Panc1 (cell line): ENCODE measurements at regions of chr1 and their contacts with region 1.

Region 1: DNA sequence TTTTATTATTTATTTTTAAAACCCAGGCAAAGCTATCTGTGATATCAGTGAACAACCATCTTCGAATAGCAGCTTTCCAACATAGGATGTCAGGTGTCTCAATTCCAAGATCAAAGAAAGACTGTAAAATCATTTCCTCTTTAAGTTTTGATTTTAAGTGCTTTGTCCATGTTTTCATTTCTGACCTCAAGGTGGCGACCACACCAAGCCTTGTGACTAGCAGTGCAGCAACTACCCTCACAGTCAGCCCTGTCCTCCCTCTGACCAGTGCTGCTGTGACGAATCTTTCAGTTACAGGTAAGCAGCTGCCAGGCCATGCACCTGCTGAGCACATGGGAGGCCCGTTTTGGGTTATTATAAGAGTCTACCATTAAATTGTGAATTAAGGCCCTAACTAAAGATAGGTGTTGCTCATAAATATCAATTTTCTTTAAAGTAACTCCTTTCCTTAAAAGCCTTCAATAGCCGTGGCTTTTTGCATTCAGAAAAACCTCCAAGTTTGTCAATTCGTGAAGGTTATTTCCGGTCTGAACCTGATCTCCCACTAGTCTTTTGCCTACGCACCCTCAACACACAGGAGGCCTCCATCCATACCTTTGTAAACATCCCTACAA is 117.0 kb downstream of the CD247 start:
- DNase-seq: peak; percentile 15
- ATAC-seq: peak; percentile 88
- H3K4me3 ChIP-seq: no peak overlapping the region
- H3K27ac ChIP-seq: no peak overlapping the region
- H3K4me1 ChIP-seq: no peaks in the 10 kb centered on the region
- H3K27me3 ChIP-seq: no peaks in the 10 kb centered on the region
- CTCF ChIP-seq: peak; percentile 82

Region 2: GRCh38 chr1:167263819-167264464 is 137.4 kb before region 1 on chr1:
- CTCF ChIA-PET with region 1: interaction called, 4 read pairs
- POLR2A ChIA-PET with region 1: no interaction called
- in situ Hi-C with region 1: no loop called
- intact Hi-C with region 1: loop called (anchors 10 kb)
- DNase-seq: no peak
- ATAC-seq: no peak
- H3K4me3 ChIP-seq: no peak overlapping the region
- H3K27ac ChIP-seq: no peak overlapping the region
- H3K4me1 ChIP-seq: peaks cover 5% of the 10 kb centered on the region; the same call in 1 of the 2 replicates
- H3K27me3 ChIP-seq: no peaks in the 10 kb centered on the region
- CTCF ChIP-seq: no peak

Region 3: GRCh38 chr1:167312871-167313270 is 88.5 kb before region 1 on chr1:
- CTCF ChIA-PET with region 1: no interaction called
- POLR2A ChIA-PET with region 1: no interaction called
- in situ Hi-C with region 1: no loop called
- intact Hi-C with region 1: no loop called
- DNase-seq: no peak
- ATAC-seq: no peak
- H3K4me3 ChIP-seq: no peak overlapping the region
- H3K27ac ChIP-seq: no peak overlapping the region
- H3K4me1 ChIP-seq: no peaks in the 10 kb centered on the region
- H3K27me3 ChIP-seq: no peaks in the 10 kb centered on the region
- CTCF ChIP-seq: no peak